ENCODE measurements at regions of chr12 and their contacts with region 1.

Region 1: GRCh38 chr12:27434673-27435565 is 11.6 kb upstream of the SMCO2 start:
- DNase-seq: peak; percentile 17
- H3K4me3 ChIP-seq: no peak overlapping the region
- H3K27ac ChIP-seq: no peak overlapping the region
- H3K4me1 ChIP-seq: peaks cover 4% of the 10 kb centered on the region
- H3K27me3 ChIP-seq: no peaks in the 10 kb centered on the region
- CTCF ChIP-seq: peak; percentile 45 to 69
- POLR2A ChIP-seq: no peak

Region 2: DNA sequence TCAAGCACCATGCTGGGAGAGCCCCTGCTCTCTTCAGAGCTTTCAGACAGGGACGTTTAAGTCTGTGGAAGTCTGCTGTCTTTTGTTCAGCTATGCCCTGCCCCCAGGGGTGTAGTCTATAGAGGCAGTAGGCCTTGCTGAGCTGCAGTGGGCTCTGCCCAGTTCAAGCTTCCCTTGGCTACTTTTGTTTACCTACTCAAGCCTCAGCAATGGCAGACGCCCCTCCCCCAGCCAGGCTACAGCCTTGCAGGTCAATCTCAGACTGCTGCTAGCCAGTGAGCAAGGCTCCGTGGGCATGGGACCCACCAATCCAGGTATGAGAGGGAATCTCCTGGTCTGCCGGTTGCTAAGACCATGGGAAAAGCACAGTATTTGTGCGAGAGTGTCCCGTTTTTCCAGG is 315.1 kb before region 1 on chr12:
- CTCF ChIA-PET with region 1: no interaction called
- POLR2A ChIA-PET with region 1: no interaction called
- dilution Hi-C with region 1: no loop called
- intact Hi-C with region 1: no loop called
- DNase-seq: no peak
- H3K4me3 ChIP-seq: no peak overlapping the region
- H3K27ac ChIP-seq: no peak overlapping the region
- H3K4me1 ChIP-seq: no peaks in the 10 kb centered on the region
- H3K27me3 ChIP-seq: no peaks in the 10 kb centered on the region
- CTCF ChIP-seq: no peak
- POLR2A ChIP-seq: no peak

Region 3: GRCh38 chr12:27396216-27396815 is 38.6 kb before region 1 on chr12:
- CTCF ChIA-PET with region 1: no interaction called
- POLR2A ChIA-PET with region 1: no interaction called
- dilution Hi-C with region 1: no loop called
- intact Hi-C with region 1: no loop called
- DNase-seq: no peak
- H3K4me3 ChIP-seq: no peak overlapping the region
- H3K27ac ChIP-seq: no peak overlapping the region
- H3K4me1 ChIP-seq: no peaks in the 10 kb centered on the region
- H3K27me3 ChIP-seq: no peaks in the 10 kb centered on the region
- CTCF ChIP-seq: no peak
- POLR2A ChIP-seq: no peak

Region 4: GRCh38 chr12:27424631-27425230 is 10.2 kb before region 1 on chr12:
- CTCF ChIA-PET with region 1: interaction called, 48 read pairs
- POLR2A ChIA-PET with region 1: no interaction called
- dilution Hi-C with region 1: no loop called
- intact Hi-C with region 1: no loop called
- DNase-seq: peak; percentile 65
- H3K4me3 ChIP-seq: no peak overlapping the region
- H3K27ac ChIP-seq: no peak overlapping the region
- H3K4me1 ChIP-seq: no peaks in the 10 kb centered on the region
- H3K27me3 ChIP-seq: no peaks in the 10 kb centered on the region
- CTCF ChIP-seq: peak; percentile 56 to 65
- POLR2A ChIP-seq: no peak

Region 5: DNA sequence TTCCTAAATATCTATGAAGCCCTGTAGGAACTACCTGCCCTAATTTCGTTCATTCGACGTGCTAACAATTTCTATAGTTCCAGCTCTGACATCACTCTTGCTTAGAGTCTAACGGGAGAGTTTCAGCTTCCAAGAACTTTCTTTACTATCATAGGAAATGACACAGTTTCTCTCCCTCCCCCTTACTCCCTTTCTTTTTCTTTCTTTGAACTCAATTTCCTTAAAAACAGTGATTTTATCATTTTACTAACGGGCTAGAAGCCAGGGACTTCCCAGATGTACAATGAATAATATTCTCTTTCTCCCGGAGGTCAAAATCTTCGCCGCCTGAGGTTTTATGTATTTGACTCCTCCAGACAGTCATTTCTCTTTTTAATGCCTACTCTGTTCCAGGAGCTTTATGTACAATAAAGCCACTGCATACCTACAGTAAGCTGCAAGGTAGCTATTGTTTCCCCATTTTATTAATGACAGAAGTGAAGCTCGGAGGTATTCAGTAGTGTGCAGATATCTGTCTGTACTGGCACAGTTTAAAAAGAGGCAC is 27.3 kb after region 1 on chr12:
- CTCF ChIA-PET with region 1: interaction called, 16 read pairs
- POLR2A ChIA-PET with region 1: no interaction called
- dilution Hi-C with region 1: no loop called
- intact Hi-C with region 1: no loop called
- DNase-seq: peak; percentile 97
- H3K4me3 ChIP-seq: peak overlapping the region in 1 of 3 experiments; percentile 33
- H3K27ac ChIP-seq: peak overlapping the region; percentile 88
- H3K4me1 ChIP-seq: peaks cover 40% of the 10 kb centered on the region
- H3K27me3 ChIP-seq: no peaks in the 10 kb centered on the region
- CTCF ChIP-seq: no peak
- POLR2A ChIP-seq: peak; percentile 29

Region 6: GRCh38 chr12:27564612-27565213 is 129.8 kb after region 1 on chr12:
- CTCF ChIA-PET with region 1: interaction called, 10 read pairs
- POLR2A ChIA-PET with region 1: no interaction called
- dilution Hi-C with region 1: no loop called
- intact Hi-C with region 1: no loop called
- DNase-seq: peak; percentile 67
- H3K4me3 ChIP-seq: no peak overlapping the region
- H3K27ac ChIP-seq: peak overlapping the region; percentile 63
- H3K4me1 ChIP-seq: peaks cover 34% of the 10 kb centered on the region
- H3K27me3 ChIP-seq: no peaks in the 10 kb centered on the region
- CTCF ChIP-seq: no peak
- POLR2A ChIP-seq: no peak

Region 7: GRCh38 chr12:27652174-27652763 is 217.3 kb after region 1 on chr12:
- CTCF ChIA-PET with region 1: interaction called, 23 read pairs
- POLR2A ChIA-PET with region 1: no interaction called
- dilution Hi-C with region 1: no loop called
- intact Hi-C with region 1: loop called (anchors 1 kb)
- DNase-seq: peak; percentile 86
- H3K4me3 ChIP-seq: no peak overlapping the region
- H3K27ac ChIP-seq: no peak overlapping the region
- H3K4me1 ChIP-seq: peaks cover 8% of the 10 kb centered on the region
- H3K27me3 ChIP-seq: no peaks in the 10 kb centered on the region
- CTCF ChIP-seq: peak; percentile 67 to 69
- POLR2A ChIP-seq: no peak